GM12878 (cell line): ENCODE measurements at regions of chr18 and their contacts with region 1.

Region 1: GRCh38 chr18:4211111-4211837 is 243.8 kb downstream of the DLGAP1 start:
- DNase-seq: no peak
- ATAC-seq: peak; percentile 57
- H3K4me3 ChIP-seq: no peak overlapping the region
- H3K27ac ChIP-seq: no peak overlapping the region
- H3K4me1 ChIP-seq: no peaks in the 10 kb centered on the region
- H3K27me3 ChIP-seq: no peaks in the 10 kb centered on the region
- CTCF ChIP-seq: no peak
- EP300 ChIP-seq: no peak
- POLR2A ChIP-seq: no peak
- RAD21 ChIP-seq: no peak

Region 2: GRCh38 chr18:4224031-4224704 is 12.9 kb after region 1 on chr18:
- CTCF ChIA-PET with region 1: interaction called, 9 read pairs
- POLR2A ChIA-PET with region 1: no interaction called
- RAD21 ChIA-PET with region 1: no interaction called
- SMC1A ChIA-PET with region 1: interaction called, 28 read pairs
- in situ Hi-C with region 1: no loop called
- intact Hi-C with region 1: no loop called
- DNase-seq: no peak
- ATAC-seq: peak; percentile 82
- H3K4me3 ChIP-seq: no peak overlapping the region
- H3K27ac ChIP-seq: no peak overlapping the region
- H3K4me1 ChIP-seq: no peaks in the 10 kb centered on the region
- H3K27me3 ChIP-seq: no peaks in the 10 kb centered on the region
- CTCF ChIP-seq: no peak
- EP300 ChIP-seq: no peak
- POLR2A ChIP-seq: no peak
- RAD21 ChIP-seq: no peak